Activated B cell treated with CpG ODN at 0.5 μM for 24 hours (primary cell): ENCODE measurements at regions of chr10 and their contacts with region 1.

Region 1: DNA sequence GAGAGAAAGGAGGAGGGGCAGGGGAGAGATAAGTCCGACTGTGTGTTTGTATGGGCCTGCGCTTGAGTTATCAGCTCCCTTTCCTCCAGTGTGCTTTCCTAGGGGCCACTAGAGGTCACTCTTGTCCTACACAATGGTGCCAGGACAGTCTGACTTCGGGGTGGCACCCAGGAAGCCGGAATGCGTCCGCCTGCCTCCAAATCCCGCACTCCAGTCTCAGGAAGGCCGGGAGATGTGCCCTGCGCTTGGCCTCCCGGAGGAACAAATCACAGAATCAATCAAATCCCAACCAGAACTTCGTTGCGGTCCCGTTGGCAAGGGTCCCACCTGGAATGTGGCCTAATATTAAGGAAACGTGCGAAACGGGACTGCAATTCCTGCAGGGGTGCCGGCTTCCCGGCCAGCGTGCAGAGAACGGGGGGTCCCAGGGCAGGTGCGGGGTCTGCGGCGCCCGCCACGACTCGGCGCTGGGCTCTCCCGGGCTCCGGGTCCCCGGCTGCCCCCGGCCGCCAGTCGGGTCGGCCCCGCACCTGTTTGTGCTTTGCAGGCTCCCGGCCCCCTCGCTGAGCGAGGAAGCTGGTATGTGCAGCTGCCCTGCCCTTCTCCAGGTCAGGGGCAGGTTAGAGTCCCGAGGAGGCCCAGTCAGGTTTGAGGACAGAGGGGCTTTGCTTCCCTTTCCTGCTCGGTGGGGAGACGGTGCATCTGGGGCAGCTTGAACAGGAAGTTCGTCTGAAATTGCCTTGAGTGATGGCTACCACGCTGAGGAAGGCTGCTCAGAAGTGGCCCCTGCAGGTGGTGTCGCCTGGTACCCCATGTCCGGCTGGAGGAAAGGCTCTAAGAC is 21.0 kb upstream of the HPS1 start:
- DNase-seq: peak; percentile 53
- ATAC-seq: peak; percentile 96
- H3K4me3 Mint-ChIP-seq: peak overlapping the region; percentile 97
- H3K27ac Mint-ChIP-seq: peak overlapping the region; percentile 88
- H3K4me1 Mint-ChIP-seq: peaks cover 4% of the 10 kb centered on the region
- H3K27me3 Mint-ChIP-seq: peaks cover 8% of the 10 kb centered on the region
- CTCF ChIP-seq: no peak

Region 2: GRCh38 chr10:98478430-98479222 is 10.9 kb after region 1 on chr10:
- CTCF ChIA-PET with region 1: interaction called, 10 read pairs
- POLR2A ChIA-PET with region 1: no interaction called
- intact Hi-C with region 1: no loop called
- DNase-seq: no peak
- ATAC-seq: no peak
- H3K4me3 Mint-ChIP-seq: no peak overlapping the region
- H3K27ac Mint-ChIP-seq: no peak overlapping the region
- H3K4me1 Mint-ChIP-seq: peaks cover 17% of the 10 kb centered on the region
- H3K27me3 Mint-ChIP-seq: no peaks in the 10 kb centered on the region
- CTCF ChIP-seq: no peak

Region 3: GRCh38 chr10:98748298-98748697 is 280.6 kb after region 1 on chr10:
- CTCF ChIA-PET with region 1: interaction called, 4 read pairs
- POLR2A ChIA-PET with region 1: no interaction called
- intact Hi-C with region 1: loop called (anchors 1 kb)
- DNase-seq: no peak
- ATAC-seq: no peak
- H3K4me3 Mint-ChIP-seq: no peak overlapping the region
- H3K27ac Mint-ChIP-seq: no peak overlapping the region
- H3K4me1 Mint-ChIP-seq: no peaks in the 10 kb centered on the region
- H3K27me3 Mint-ChIP-seq: peaks cover 4% of the 10 kb centered on the region
- CTCF ChIP-seq: no peak

Region 4: DNA sequence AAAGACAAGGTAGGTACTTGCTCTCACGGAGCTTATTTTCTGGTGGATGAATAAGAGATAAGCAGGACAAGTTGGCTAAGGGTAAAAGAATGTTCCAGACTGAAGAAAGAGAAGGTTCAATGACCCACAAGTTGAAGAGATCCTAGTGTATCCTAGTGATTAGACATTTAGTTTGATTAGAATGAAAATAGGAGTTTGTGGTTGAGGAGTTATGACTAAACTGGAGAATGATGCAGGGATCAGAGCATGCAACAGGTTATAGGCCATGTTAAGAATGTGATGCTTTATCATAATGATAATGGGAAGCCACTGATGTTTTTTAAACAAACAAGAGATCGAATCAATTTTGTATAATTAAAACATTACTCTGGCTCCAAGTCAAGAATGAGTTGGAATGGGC is 410.7 kb after region 1 on chr10:
- CTCF ChIA-PET with region 1: no interaction called
- POLR2A ChIA-PET with region 1: no interaction called
- intact Hi-C with region 1: no loop called
- DNase-seq: no peak
- ATAC-seq: no peak
- H3K4me3 Mint-ChIP-seq: no peak overlapping the region
- H3K27ac Mint-ChIP-seq: no peak overlapping the region
- H3K4me1 Mint-ChIP-seq: no peaks in the 10 kb centered on the region
- H3K27me3 Mint-ChIP-seq: peaks cover 11% of the 10 kb centered on the region
- CTCF ChIP-seq: no peak

Region 5: DNA sequence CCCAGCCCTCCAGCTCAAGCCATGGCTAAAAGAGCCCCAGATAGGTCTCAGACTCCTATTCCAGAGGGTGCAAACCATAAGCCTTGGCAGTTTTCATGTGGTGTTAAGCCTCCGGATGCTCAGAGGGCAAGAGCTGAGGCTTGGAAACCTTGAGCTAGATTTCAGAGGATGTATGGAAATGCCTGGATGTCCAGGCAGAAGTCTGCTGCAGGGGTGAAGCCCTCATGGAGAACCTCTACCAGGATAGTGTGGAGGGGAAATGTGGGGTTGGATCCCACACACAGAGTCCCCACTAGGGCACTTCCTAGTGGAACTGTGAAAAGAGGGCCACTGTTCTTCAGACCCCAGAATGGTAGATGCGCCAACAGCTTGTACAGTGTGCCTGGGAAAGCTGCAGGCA is 781.1 kb after region 1 on chr10:
- CTCF ChIA-PET with region 1: interaction called, 86 read pairs
- POLR2A ChIA-PET with region 1: interaction called, 4 read pairs
- intact Hi-C with region 1: loop called (anchors 1 kb)
- DNase-seq: no peak
- ATAC-seq: no peak
- H3K4me3 Mint-ChIP-seq: no peak overlapping the region
- H3K27ac Mint-ChIP-seq: no peak overlapping the region
- H3K4me1 Mint-ChIP-seq: no peaks in the 10 kb centered on the region
- H3K27me3 Mint-ChIP-seq: peaks cover 17% of the 10 kb centered on the region
- CTCF ChIP-seq: no peak

Region 6: GRCh38 chr10:99370993-99371392 is 903.3 kb after region 1 on chr10:
- CTCF ChIA-PET with region 1: no interaction called
- POLR2A ChIA-PET with region 1: no interaction called
- intact Hi-C with region 1: loop called (anchors 1 kb)
- DNase-seq: no peak
- ATAC-seq: no peak
- H3K4me3 Mint-ChIP-seq: peak overlapping the region; percentile 17
- H3K27ac Mint-ChIP-seq: no peak overlapping the region
- H3K4me1 Mint-ChIP-seq: peaks cover 5% of the 10 kb centered on the region
- H3K27me3 Mint-ChIP-seq: peaks cover 7% of the 10 kb centered on the region
- CTCF ChIP-seq: no peak

Region 7: GRCh38 chr10:99430451-99431189 is 962.9 kb after region 1 on chr10 and contains the start of gene GOT1:
- CTCF ChIA-PET with region 1: no interaction called
- POLR2A ChIA-PET with region 1: no interaction called
- intact Hi-C with region 1: loop called (anchors 5 kb)
- DNase-seq: peak; percentile 85
- ATAC-seq: peak; percentile 91
- H3K4me3 Mint-ChIP-seq: peak within 1 kb of the TSS; percentile 98
- H3K27ac Mint-ChIP-seq: peak within 1 kb of the TSS; percentile 92
- H3K4me1 Mint-ChIP-seq: peaks cover 29% of the 10 kb centered on the region
- H3K27me3 Mint-ChIP-seq: no peaks in the 10 kb centered on the region
- CTCF ChIP-seq: no peak
- total RNA-seq, gene GOT1: 30.1 and 31.4 TPM in 2 replicates